ENCODE measurements at regions of chr14 and their contacts with region 1.

Region 1: GRCh38 chr14:69090187-69090789 is 62.6 kb downstream of the DCAF5 start:
- DNase-seq: peak in 1 of 6 donors; percentile 37
- ATAC-seq: peak in 3 of 4 donors; percentile 76 to 78 (median 78)
- H3K4me3 ChIP-seq: no peak overlapping the region
- H3K27ac ChIP-seq: no peak overlapping the region
- H3K4me1 ChIP-seq: peaks cover 0 to 15% (median 0%) of the 10 kb centered on the region in 3 donors
- H3K27me3 ChIP-seq: no peaks in the 10 kb centered on the region
- CTCF ChIP-seq: peak in 3 of 4 donors; percentile 40 to 61 (median 49)

Region 2: GRCh38 chr14:68862954-68863594 is 227.2 kb before region 1 on chr14:
- intact Hi-C with region 1: loop called in 1 of 3 experiments (anchors 10 kb)
- DNase-seq: peak in 5 of 6 donors; percentile 59 to 83 (median 71)
- ATAC-seq: peak; percentile 84 to 97 (median 93)
- H3K4me3 ChIP-seq: no peak overlapping the region
- H3K27ac ChIP-seq: no peak overlapping the region
- H3K4me1 ChIP-seq: no peaks in the 10 kb centered on the region
- H3K27me3 ChIP-seq: no peaks in the 10 kb centered on the region
- CTCF ChIP-seq: peak; percentile 37 to 69 (median 56)

Region 3: DNA sequence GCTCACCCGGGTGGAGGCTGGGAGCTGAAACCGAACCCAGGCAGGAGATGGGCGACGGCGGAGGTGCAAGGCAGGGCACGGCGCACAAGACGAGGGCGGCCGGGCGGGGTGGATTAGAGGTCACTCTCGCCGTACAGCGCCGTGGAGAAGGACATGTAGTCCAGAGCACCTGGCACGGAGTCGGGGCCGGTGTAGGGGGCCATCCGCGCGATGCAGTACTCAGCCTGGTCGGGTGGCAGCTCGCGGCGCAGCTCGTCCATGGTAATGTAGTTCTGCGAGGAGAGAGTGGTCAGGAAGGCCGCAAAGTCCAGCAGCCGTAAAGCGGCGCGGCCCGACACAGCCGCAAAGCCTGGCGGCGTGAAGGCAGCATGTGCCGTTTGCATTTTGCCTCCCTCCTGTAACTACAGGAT is 215.5 kb before region 1 on chr14:
- intact Hi-C with region 1: loop called in 2 of 3 experiments (anchors 10 kb)
- DNase-seq: peak in 1 of 6 donors; percentile 56
- ATAC-seq: peak in 2 of 4 donors; percentile 19 to 39
- H3K4me3 ChIP-seq: no peak overlapping the region
- H3K27ac ChIP-seq: no peak overlapping the region
- H3K4me1 ChIP-seq: no peaks in the 10 kb centered on the region
- H3K27me3 ChIP-seq: no peaks in the 10 kb centered on the region
- CTCF ChIP-seq: no peak

Region 4: DNA sequence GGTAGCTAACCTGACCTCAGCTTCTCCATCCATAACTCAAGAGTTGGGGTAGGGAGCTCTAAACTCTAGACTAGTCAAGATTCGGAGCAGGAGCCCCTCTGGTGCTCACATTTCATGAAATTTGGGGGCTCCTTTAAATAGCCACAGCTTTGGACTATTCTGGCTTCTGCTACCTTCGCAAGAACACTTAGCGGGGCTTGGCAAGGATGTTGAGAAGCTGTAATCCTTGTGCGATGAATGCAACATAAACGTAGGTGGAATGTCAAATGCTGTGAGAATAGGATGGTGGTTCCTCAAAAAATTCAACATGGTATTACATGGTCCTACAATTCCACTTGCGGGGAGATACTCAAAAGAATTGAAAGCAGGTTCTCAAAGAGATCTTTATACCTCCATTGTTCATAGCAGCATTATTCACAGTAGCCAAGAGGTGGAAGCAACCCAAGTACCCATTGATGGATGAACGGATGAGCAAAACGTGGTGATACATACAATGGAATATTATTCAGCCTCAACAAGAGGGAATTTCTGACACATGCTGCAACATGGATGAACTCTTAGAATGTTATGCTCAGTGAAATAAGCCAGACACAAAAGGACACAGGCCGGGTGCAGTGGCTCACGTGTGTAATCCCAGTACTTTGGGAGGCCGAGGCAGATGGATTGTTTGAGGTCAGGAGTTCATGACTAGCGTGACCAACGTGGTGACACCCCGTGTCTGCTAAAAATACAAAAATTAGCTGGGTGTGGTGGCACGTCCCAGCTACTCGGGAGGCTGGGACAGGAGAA is 185.0 kb before region 1 on chr14:
- intact Hi-C with region 1: loop called in 2 of 3 experiments (anchors 10 kb)
- DNase-seq: no peak
- ATAC-seq: no peak
- H3K4me3 ChIP-seq: no peak overlapping the region
- H3K27ac ChIP-seq: no peak overlapping the region
- H3K4me1 ChIP-seq: no peaks in the 10 kb centered on the region
- H3K27me3 ChIP-seq: no peaks in the 10 kb centered on the region
- CTCF ChIP-seq: no peak

Region 5: GRCh38 chr14:68911594-68912227 is 178.6 kb before region 1 on chr14:
- intact Hi-C with region 1: loop called in 2 of 3 experiments (anchors 10 kb)
- DNase-seq: peak; percentile 61 to 88 (median 78)
- ATAC-seq: peak; percentile 89 to 96 (median 94)
- H3K4me3 ChIP-seq: no peak overlapping the region
- H3K27ac ChIP-seq: no peak overlapping the region
- H3K4me1 ChIP-seq: peaks cover 0 to 6% (median 0%) of the 10 kb centered on the region in 3 donors
- H3K27me3 ChIP-seq: no peaks in the 10 kb centered on the region
- CTCF ChIP-seq: peak; percentile 84 to 97 (median 93)

Measured in pancreas (tissue), 10 donors.